ENCODE measurements at regions of chr4 and their contacts with region 1.

Region 1: GRCh38 chr4:174522183-174523048 is at the start of gene HPGD:
- DNase-seq: peak; percentile 76 to 86 (median 85)
- ATAC-seq: peak; percentile 82
- H3K4me3 ChIP-seq: peak within 1 kb of the TSS; percentile 35
- H3K4me1 ChIP-seq: no peaks in the 10 kb centered on the region
- CTCF ChIP-seq: no peak
- total RNA-seq, gene HPGD: 177 to 256 (median 237) TPM

Region 2: DNA sequence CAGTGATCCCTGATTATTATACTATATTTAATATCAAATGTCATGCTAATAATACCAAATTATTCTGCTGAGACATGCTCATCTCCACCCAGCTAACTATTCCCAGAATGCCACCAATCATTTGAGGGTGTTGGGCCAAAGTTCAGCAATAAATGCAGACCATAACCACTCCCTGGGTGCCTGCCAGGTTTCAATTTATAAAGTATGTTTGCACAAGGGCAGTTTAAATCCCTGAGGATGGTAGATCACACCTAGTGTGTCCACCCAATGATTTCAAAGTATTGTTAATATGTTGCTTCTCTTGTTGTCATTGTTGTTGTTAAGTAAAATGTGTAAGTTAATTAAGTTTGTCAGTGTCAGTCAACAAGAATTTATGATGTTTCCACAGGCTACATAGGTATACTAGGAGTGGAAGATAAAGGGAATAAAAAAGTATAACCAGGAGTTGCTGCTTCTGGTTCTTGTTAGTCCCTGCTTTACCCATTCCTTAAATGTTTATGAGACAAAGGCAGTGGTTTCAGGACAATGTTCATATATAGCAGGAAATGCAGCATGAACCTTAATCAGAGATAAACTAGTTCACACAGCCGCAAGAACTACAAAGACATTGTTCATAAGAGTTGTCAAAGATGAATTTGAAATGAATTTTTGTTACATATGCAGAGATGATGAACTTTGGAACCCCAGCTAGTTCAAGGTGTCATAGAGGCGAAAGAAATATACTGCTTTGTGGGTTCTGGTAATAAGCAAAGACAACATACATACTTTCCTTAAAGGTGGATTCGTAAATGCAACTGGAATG is 25.6 kb before region 1 on chr4:
- intact Hi-C with region 1: loop called in 1 of 2 experiments (anchors 2 kb)
- DNase-seq: peak in 2 of 3 donors; percentile 52 to 91
- ATAC-seq: peak; percentile 87
- H3K4me3 ChIP-seq: no peak overlapping the region
- H3K4me1 ChIP-seq: peaks cover 8% of the 10 kb centered on the region
- CTCF ChIP-seq: no peak

Measured in mucosa of descending colon (tissue), 3 donors.